ENCODE measurements at regions of chr5 and their contacts with region 1.

Region 1: GRCh38 chr5:157558041-157558595 is 17.5 kb downstream of the ADAM19 start:
- DNase-seq: peak; percentile 60 to 96
- H3K4me3 ChIP-seq: 0 out of 2 replicates have a peak overlapping the region, but pooled peaks have one; percentile 2
- H3K27ac ChIP-seq: peak overlapping the region; percentile 85
- H3K4me1 ChIP-seq: peaks cover 69% of the 10 kb centered on the region
- H3K27me3 ChIP-seq: no peaks in the 10 kb centered on the region
- CTCF ChIP-seq: no peak

Region 2: GRCh38 chr5:157384971-157385709 is 173.0 kb before region 1 on chr5:
- CTCF ChIA-PET with region 1: no interaction called
- POLR2A ChIA-PET with region 1: no interaction called
- intact Hi-C with region 1: loop called (anchors 5 kb)
- DNase-seq: peak; percentile 75 to 91
- H3K4me3 ChIP-seq: no peak overlapping the region
- H3K27ac ChIP-seq: peak overlapping the region; percentile 68
- H3K4me1 ChIP-seq: peaks cover 48% of the 10 kb centered on the region
- H3K27me3 ChIP-seq: no peaks in the 10 kb centered on the region
- CTCF ChIP-seq: no peak

Region 3: GRCh38 chr5:157511651-157512644 is 46.2 kb before region 1 on chr5:
- CTCF ChIA-PET with region 1: no interaction called
- POLR2A ChIA-PET with region 1: no interaction called
- intact Hi-C with region 1: loop called (anchors 2 kb)
- DNase-seq: peak; percentile 85 to 87
- H3K4me3 ChIP-seq: no peak overlapping the region
- H3K27ac ChIP-seq: peak overlapping the region; percentile 96
- H3K4me1 ChIP-seq: peaks cover 40% of the 10 kb centered on the region
- H3K27me3 ChIP-seq: no peaks in the 10 kb centered on the region
- CTCF ChIP-seq: no peak

Region 4: GRCh38 chr5:157575381-157576020 is 17.4 kb after region 1 on chr5 and contains the start of gene ADAM19:
- CTCF ChIA-PET with region 1: no interaction called
- POLR2A ChIA-PET with region 1: no interaction called
- intact Hi-C with region 1: loop called (anchors 1 kb)
- DNase-seq: peak in 1 of 2 experiments; percentile 50
- H3K4me3 ChIP-seq: peak within 1 kb of the TSS; percentile 62
- H3K27ac ChIP-seq: peak within 1 kb of the TSS; percentile 35
- H3K4me1 ChIP-seq: peaks cover 25% of the 10 kb centered on the region; the same call in 1 of the 2 replicates
- H3K27me3 ChIP-seq: no peaks in the 10 kb centered on the region
- CTCF ChIP-seq: no peak
- total RNA-seq, gene ADAM19: 7.6 and 9.3 TPM in 2 replicates

Region 5: DNA sequence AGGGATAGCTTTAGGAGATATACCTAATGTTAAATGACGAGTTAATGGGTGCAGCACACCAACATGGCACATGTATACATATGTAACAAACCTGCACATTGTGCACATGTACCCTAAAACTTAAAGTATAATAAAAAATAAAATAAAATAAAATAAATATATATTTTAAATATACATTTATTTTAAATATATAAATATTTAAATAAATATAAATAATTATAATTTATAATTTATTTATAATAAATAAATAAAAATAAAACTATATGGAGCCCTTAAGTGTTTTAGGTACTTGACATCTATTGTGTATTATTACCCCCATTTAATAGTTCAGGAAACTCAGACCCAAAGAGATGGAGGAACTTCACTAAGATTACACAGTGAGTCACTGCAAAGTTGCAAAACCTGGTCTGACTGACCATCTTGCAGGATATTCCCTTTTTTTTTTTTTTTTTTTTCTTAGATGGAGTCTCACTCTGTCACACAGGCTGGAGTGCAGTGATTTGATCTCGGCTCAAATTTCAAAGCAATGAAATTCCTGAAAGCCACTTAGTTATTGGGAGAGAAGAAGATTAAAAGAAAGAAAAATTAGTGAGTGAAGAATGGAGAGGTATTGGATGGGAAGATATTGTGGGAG is 107.5 kb after region 1 on chr5:
- CTCF ChIA-PET with region 1: no interaction called
- POLR2A ChIA-PET with region 1: no interaction called
- intact Hi-C with region 1: loop called (anchors 5 kb)
- DNase-seq: peak; percentile 35 to 93
- H3K4me3 ChIP-seq: no peak overlapping the region
- H3K27ac ChIP-seq: peak overlapping the region; percentile 33; the same call in 1 of the 2 replicates
- H3K4me1 ChIP-seq: peaks cover 5% of the 10 kb centered on the region
- H3K27me3 ChIP-seq: no peaks in the 10 kb centered on the region
- CTCF ChIP-seq: no peak